GM10248 (cell line): ENCODE measurements at regions of chr18 and their contacts with region 1.

Region 1: DNA sequence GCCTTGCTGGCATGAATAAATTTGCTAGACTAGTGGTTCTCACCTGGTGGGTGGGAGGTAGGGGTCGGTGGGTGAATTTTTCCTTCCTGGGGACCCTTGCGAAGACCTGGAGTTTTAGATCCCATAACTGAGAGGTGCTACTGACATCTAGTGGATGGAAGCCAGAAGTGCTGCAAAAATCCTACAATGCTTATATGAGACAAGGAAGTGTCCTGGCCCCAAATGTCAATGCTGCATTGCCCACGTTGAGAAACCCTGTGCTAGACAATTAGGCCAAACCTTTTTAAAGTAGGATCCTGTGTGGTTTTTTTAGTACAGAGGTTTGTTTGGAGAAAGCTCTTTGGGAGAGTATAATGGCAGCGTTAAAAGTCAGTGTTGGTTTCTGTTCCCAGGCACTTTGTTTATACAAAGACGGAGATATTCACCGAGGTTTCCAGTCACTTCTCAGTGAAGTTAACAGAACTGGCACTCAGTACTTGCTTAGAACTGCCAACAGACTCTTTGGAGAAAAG is 9.6 kb downstream of the SERPINB8 start:
- DNase-seq: peak; percentile 52
- CTCF ChIP-seq: peak; percentile 86

Region 2: GRCh38 chr18:63617049-63617914 is 362.2 kb before region 1 on chr18:
- CTCF ChIA-PET with region 1: no interaction called
- POLR2A ChIA-PET with region 1: no interaction called
- DNase-seq: no peak
- CTCF ChIP-seq: no peak

Region 3: DNA sequence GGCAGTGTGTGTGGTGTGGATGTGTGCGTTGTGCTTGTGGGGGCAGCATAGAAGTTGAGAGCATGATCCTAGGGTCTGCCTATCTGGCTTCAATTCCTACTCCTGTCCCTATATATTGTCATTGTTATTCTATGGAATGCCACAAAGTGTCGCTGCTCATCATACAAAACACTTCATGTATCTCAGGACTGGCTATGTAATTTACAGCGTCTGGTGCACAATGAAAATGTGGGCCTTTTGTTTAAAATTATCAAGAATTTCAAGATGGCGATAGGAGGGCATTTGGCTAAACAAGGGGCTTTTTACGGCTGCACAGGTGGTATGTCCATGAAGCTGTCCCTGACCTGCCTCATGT is 88.5 kb before region 1 on chr18:
- CTCF ChIA-PET with region 1: no interaction called
- POLR2A ChIA-PET with region 1: no interaction called
- DNase-seq: peak; percentile 48
- CTCF ChIP-seq: peak; percentile 54

Region 4: DNA sequence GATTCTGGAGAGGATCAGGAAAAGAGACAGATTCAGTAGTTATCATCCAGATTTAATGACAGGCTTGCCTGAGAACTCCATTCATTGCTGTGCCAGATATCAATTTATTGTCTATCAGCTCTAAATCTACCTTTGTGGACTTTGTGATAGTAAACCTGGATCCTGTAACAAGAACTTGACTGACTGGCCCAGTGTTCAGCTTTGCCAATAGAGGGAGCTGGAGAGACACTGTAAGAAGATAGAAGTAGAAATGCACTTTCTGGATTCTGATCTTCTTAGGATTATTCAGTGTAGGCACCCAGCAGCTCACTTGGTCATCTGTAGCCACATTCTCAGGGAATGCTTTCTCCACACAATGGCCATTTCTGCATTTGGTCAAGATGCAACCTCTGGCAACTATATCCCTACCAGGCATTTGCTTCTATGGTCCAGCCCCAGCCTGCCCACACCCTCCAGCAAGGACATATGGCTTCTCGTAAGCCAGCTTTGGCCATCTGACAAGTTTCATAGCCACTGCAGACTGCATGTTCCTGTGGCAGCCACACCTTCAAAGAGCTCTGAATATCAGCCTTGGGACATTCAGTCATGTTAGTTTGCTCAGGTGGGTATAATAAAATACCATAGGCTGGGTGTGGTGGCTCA is 15.7 kb before region 1 on chr18:
- CTCF ChIA-PET with region 1: interaction called, 48 read pairs
- POLR2A ChIA-PET with region 1: no interaction called
- DNase-seq: peak; percentile 33
- CTCF ChIP-seq: peak; percentile 82

Region 5: DNA sequence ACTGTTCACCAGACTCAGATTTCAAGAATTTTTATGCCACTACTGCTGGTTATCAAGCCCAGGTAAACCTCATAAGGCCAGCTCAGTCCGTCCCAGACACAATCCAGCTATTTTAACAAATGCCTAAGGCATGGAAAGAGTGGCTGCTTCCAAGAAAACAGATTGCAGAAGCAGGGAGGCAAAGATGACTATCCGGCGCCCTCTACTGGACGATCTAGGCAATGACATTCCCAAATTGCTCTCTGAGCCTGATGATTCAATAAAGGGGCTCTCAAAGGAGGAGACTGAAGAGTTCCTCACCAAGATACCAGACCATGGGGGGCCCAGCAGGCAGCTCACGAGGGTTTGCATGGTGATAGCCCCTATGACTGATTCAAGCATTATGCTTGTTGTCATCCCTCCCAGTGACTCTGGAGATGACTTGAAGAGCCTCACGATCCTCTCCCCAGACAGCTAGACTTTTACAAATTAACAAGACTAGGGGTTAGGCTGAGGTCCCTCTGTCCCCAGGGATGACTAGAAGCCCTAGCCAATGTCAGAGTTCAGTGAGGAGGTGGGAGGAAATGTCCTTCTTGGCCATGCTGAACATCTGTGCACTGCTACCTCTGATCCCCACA is 15.4 kb after region 1 on chr18:
- CTCF ChIA-PET with region 1: interaction called, 18 read pairs
- POLR2A ChIA-PET with region 1: no interaction called
- DNase-seq: peak; percentile 63
- CTCF ChIP-seq: peak; percentile 60

Region 6: DNA sequence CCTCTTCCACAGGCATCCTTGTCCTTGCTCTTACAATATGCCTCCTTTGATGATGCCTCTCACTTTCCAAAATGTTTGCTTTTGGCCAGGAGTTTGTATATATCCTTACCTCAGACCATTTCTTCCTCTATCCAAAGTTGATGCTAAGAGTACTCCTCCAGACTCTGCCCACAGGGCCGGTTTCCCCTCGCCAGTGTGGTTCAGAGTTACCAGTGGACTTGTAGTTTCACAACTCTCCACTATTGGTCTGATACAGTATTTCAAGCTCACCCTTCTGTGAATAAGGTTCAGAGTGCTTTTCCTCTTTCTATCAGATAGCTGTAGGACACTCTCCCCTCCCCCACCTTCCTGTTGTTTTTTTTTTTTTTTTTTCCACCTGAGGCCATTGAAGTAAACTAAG is 211.6 kb after region 1 on chr18:
- CTCF ChIA-PET with region 1: no interaction called
- POLR2A ChIA-PET with region 1: no interaction called
- DNase-seq: no peak
- CTCF ChIP-seq: no peak